AG04449 (cell line): ENCODE measurements at regions of chr19 and their contacts with region 1.

Region 1: DNA sequence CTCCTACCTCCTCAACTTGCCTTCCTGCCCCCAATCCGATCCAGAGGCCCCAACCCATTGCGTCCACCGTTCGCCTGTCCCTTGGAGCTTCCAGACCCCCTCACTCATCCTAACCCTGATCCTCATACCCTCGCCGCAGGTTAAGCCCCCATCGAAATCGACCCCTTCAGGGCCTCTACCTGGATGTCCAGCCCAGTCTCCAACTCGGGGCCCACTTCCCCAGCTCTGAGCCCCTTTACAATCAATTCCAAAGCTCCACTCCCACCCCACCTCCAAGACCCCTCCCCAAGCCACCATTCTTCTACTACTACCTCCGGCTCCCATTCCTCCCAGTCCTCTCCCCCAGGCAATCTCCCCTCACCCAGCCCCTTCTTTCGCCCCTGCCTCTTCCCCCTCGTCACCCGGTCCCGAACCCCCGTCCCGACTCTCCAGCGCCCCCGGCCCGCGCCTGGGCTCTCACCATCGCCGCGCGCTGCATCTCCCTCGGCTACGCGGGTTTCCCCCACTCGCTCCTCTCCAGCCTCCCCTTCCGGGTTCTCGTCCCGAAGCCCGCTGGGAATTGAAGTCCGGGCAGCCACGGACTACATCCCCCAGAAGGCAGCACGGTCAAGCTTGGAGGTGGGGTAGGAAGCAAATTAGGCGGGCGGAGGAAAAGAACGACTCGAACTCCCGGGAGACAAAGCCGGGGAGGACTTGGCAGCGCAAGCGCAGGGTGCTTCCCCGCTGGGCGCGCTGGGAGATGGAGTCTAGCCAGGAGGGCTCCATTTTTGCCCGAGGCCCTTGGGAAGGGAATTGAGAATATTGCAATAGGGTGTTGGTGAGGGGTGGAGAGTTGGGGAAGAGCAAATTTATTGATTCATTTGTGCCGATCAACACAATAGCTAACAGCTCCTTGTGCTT is at the start of gene FBXO46:
- DNase-seq: peak; percentile 90
- H3K4me3 ChIP-seq: peak within 1 kb of the TSS; percentile 88
- CTCF ChIP-seq: peak; percentile 43

Region 2: GRCh38 chr19:45717166-45717982 is 13.3 kb before region 1 on chr19:
- CTCF ChIA-PET with region 1: interaction called, 12 read pairs
- POLR2A ChIA-PET with region 1: interaction called, 11 read pairs
- DNase-seq: peak; percentile 88
- H3K4me3 ChIP-seq: peak overlapping the region; percentile 75
- CTCF ChIP-seq: peak; percentile 9